Caco-2 (cell line): ENCODE measurements at regions of chr16 and their contacts with region 1.

Region 1: DNA sequence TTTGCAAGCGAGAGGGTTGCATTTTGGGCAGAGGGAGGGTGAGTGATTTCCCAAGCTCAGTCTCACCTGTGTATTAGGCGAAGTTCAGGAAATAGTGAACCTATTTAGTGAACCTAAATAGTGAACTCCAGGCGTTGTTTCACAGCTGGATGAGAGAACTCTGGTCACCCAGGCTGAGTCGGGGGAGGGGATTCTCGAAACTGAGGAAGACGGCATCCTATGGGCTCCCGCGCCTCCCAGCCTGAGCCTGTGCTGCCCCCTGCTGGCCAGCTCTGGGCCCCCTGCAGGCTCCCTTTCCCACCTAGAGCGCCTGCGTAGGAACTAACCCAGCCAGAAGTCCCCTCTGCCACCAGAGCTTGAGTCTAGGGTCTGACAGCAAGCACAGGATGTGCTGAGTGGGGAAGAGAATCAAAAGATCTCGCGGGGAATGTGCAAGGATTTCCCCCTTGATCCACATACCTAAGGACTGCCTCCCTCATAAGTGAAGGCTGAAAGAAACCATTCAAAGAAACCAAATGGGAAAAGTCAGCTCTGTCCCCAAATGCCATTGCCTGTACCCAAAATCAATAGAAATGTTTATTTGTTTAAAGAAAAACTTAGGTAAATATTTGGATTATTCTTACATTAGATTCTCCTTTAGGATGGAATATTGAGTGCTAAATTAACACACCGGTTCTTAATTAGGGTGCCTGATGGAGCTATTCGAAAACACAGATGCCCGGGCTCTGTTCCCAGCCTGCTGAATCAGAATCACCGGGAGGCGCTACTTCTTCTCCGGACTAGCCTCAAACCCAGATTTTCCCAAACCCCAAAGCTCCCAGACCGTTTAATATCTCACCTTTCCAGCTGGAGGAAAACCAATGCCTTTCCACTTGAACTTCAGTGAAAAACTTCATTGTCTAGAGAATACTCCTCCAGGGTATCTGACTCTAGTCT is 14.8 kb upstream of the MARVELD3 start:
- DNase-seq: peak; percentile 86 to 94
- H3K4me3 ChIP-seq: no peak overlapping the region
- H3K4me3 Mint-ChIP-seq: no peak overlapping the region
- H3K27ac Mint-ChIP-seq: no peak overlapping the region
- H3K4me1 ChIP-seq: no peaks in the 10 kb centered on the region
- H3K4me1 Mint-ChIP-seq: no peaks in the 10 kb centered on the region
- H3K27me3 ChIP-seq: no peaks in the 10 kb centered on the region
- H3K27me3 Mint-ChIP-seq: peaks cover 3% of the 10 kb centered on the region
- CTCF ChIP-seq: peak; percentile 99 to 100

Region 2: GRCh38 chr16:70391881-70392481 is 1219.2 kb before region 1 on chr16:
- CTCF ChIA-PET with region 1: no interaction called
- POLR2A ChIA-PET with region 1: no interaction called
- intact Hi-C with region 1: no loop called
- DNase-seq: no peak
- H3K4me3 ChIP-seq: no peak overlapping the region
- H3K4me3 Mint-ChIP-seq: no peak overlapping the region
- H3K27ac Mint-ChIP-seq: no peak overlapping the region
- H3K4me1 ChIP-seq: peaks cover 22% of the 10 kb centered on the region
- H3K4me1 Mint-ChIP-seq: peaks cover 7% of the 10 kb centered on the region
- H3K27me3 ChIP-seq: no peaks in the 10 kb centered on the region
- H3K27me3 Mint-ChIP-seq: no peaks in the 10 kb centered on the region
- CTCF ChIP-seq: no peak

Region 3: DNA sequence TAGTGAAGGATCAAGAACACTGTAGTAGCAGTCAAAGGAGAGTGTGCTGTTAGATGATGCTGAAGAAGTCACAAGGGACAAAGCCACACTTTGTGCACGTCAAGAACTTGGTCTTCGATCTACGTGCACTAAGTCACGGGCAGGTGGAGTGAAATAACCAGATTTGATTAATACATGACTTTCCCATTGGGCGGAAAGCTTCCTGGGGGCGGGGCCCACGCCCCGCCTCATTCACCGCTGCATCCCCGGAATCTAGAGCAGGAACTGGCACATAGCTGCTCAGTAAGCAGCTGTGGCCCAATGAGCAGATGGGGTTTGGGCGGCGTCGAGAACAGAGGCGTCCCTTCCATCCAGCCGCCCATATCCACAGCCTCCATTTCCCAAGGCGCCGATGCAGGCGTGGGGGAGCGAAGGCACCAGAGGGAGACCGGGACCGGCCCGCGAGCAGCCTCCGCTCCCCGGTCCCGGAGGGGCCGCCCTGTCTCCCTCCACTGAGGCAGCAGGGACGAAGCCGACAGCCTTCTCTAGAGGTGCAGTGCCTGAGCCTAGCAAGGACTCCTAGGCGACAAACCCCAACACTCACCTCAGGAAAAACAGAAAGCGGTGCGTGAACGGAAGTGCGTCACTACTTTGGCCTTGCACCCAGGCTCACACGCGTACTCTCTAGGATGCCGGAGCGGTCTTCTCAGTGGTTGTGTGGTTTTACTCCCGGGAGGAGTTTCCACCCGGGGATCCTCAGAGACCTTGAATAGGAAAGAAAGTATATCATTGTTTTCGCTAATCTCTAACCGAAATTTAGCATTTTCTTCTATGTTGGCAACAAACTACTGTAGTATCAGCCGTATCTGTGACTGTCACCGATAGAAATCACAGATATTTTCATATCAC is 127.0 kb before region 1 on chr16:
- CTCF ChIA-PET with region 1: interaction called, 8 read pairs
- POLR2A ChIA-PET with region 1: no interaction called
- intact Hi-C with region 1: loop called (anchors 1 kb)
- DNase-seq: peak; percentile 78 to 85
- H3K4me3 ChIP-seq: peak overlapping the region; percentile 65
- H3K4me3 Mint-ChIP-seq: peak overlapping the region; percentile 76
- H3K27ac Mint-ChIP-seq: peak overlapping the region; percentile 36
- H3K4me1 ChIP-seq: no peaks in the 10 kb centered on the region
- H3K4me1 Mint-ChIP-seq: no peaks in the 10 kb centered on the region
- H3K27me3 ChIP-seq: no peaks in the 10 kb centered on the region
- H3K27me3 Mint-ChIP-seq: no peaks in the 10 kb centered on the region
- CTCF ChIP-seq: no peak

Region 4: GRCh38 chr16:71537643-71538042 is 73.6 kb before region 1 on chr16:
- CTCF ChIA-PET with region 1: interaction called, 6 read pairs
- POLR2A ChIA-PET with region 1: no interaction called
- intact Hi-C with region 1: loop called (anchors 1 kb)
- DNase-seq: peak; percentile 62 to 71
- H3K4me3 ChIP-seq: no peak overlapping the region
- H3K4me3 Mint-ChIP-seq: no peak overlapping the region
- H3K27ac Mint-ChIP-seq: no peak overlapping the region
- H3K4me1 ChIP-seq: no peaks in the 10 kb centered on the region
- H3K4me1 Mint-ChIP-seq: no peaks in the 10 kb centered on the region
- H3K27me3 ChIP-seq: no peaks in the 10 kb centered on the region
- H3K27me3 Mint-ChIP-seq: peaks cover 14% of the 10 kb centered on the region
- CTCF ChIP-seq: peak; percentile 53 to 88

Region 5: GRCh38 chr16:71626018-71626857 is 15.0 kb after region 1 on chr16 and contains the start of gene MARVELD3:
- CTCF ChIA-PET with region 1: interaction called, 21 read pairs
- POLR2A ChIA-PET with region 1: interaction called, 14 read pairs
- intact Hi-C with region 1: no loop called
- DNase-seq: peak; percentile 96 to 99
- H3K4me3 ChIP-seq: peak within 1 kb of the TSS; percentile 85
- H3K4me3 Mint-ChIP-seq: no peak within 1 kb of the TSS
- H3K27ac Mint-ChIP-seq: peak within 1 kb of the TSS; percentile 75
- H3K4me1 ChIP-seq: peaks cover 12% of the 10 kb centered on the region
- H3K4me1 Mint-ChIP-seq: peaks cover 9% of the 10 kb centered on the region
- H3K27me3 ChIP-seq: no peaks in the 10 kb centered on the region
- H3K27me3 Mint-ChIP-seq: no peaks in the 10 kb centered on the region
- CTCF ChIP-seq: peak; percentile 41 to 75
- total RNA-seq, gene MARVELD3: 50.6 and 51.7 TPM in 2 replicates

Region 6: DNA sequence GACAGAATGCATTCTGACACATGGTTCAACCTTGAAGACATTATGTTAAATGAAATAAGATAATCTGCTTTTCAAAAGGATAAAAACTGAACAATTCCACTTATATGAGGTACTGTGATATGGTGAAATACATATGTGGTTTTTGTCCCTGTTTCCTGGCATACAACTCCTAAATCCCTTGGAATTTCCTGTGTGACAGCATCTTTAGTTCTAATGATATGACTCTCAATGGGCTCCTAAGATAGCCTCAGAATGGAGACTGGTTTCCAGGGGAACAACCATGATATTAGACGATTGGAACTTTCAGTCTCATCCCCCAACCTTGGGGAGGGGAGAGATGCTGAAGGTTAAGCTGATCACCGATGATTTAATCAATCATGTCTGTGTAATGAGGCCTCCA is 151.0 kb after region 1 on chr16:
- CTCF ChIA-PET with region 1: no interaction called
- POLR2A ChIA-PET with region 1: no interaction called
- intact Hi-C with region 1: no loop called
- DNase-seq: no peak
- H3K4me3 ChIP-seq: no peak overlapping the region
- H3K4me3 Mint-ChIP-seq: no peak overlapping the region
- H3K27ac Mint-ChIP-seq: no peak overlapping the region
- H3K4me1 ChIP-seq: peaks cover 7% of the 10 kb centered on the region
- H3K4me1 Mint-ChIP-seq: peaks cover 8% of the 10 kb centered on the region
- H3K27me3 ChIP-seq: no peaks in the 10 kb centered on the region
- H3K27me3 Mint-ChIP-seq: no peaks in the 10 kb centered on the region
- CTCF ChIP-seq: no peak

Region 7: GRCh38 chr16:71840012-71840411 is 228.8 kb after region 1 on chr16:
- CTCF ChIA-PET with region 1: no interaction called
- POLR2A ChIA-PET with region 1: no interaction called
- intact Hi-C with region 1: no loop called
- DNase-seq: no peak
- H3K4me3 ChIP-seq: no peak overlapping the region
- H3K4me3 Mint-ChIP-seq: no peak overlapping the region
- H3K27ac Mint-ChIP-seq: no peak overlapping the region
- H3K4me1 ChIP-seq: no peaks in the 10 kb centered on the region
- H3K4me1 Mint-ChIP-seq: no peaks in the 10 kb centered on the region
- H3K27me3 ChIP-seq: no peaks in the 10 kb centered on the region
- H3K27me3 Mint-ChIP-seq: no peaks in the 10 kb centered on the region
- CTCF ChIP-seq: no peak